ENCODE measurements at regions of chr16 and their contacts with region 1.

Region 1: DNA sequence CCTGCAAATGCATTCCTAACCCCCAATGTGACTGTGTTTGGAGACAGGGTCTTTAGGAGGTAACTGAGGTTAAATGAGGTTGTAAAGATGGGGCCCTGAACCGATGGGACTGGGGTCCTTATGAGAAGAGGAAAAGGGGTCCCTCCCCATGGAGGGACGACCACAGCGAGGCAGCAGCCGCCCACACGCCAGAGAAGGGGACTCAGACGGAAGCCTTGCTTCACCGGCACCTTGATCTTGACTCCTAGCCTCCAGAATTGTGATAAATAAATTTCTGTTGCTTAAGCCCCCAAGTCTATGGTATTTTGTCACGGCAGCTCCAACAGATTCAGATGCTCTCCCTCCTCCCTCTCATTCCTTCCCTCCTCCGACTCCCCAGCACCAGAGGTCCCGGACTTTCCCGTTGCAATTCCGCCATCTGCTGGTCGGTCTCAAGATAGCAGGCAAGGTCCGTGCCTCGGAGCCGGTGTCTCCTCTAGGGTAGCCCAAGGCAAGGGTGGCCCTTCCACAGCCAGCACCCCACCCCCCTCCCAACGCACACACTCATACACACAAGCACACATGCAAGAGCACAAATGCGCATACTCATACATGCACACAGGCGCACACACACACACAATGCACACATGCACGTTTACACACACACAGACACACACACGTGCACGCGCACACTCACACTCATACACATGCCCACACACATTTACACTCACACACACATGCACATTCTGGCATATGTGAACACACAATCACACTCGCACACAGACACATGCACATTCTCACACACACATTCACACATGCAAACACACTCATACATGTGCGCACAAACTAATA is 23.1 kb upstream of the C16orf78 start:
- DNase-seq: peak; percentile 39
- H3K4me3 ChIP-seq: no peak overlapping the region
- H3K27ac ChIP-seq: no peak overlapping the region
- H3K4me1 ChIP-seq: no peaks in the 10 kb centered on the region
- H3K27me3 ChIP-seq: no peaks in the 10 kb centered on the region
- CTCF ChIP-seq: peak; percentile 69 to 83

Region 2: GRCh38 chr16:48632137-48632774 is 718.2 kb before region 1 on chr16:
- CTCF ChIA-PET with region 1: no interaction called
- dilution Hi-C with region 1: no loop called
- in situ Hi-C with region 1: no loop called
- intact Hi-C with region 1: loop called (anchors 2 kb)
- DNase-seq: no peak
- H3K4me3 ChIP-seq: no peak overlapping the region
- H3K27ac ChIP-seq: no peak overlapping the region
- H3K4me1 ChIP-seq: no peaks in the 10 kb centered on the region
- H3K27me3 ChIP-seq: no peaks in the 10 kb centered on the region
- CTCF ChIP-seq: no peak

Region 3: GRCh38 chr16:48790151-48790550 is 560.3 kb before region 1 on chr16:
- CTCF ChIA-PET with region 1: no interaction called
- dilution Hi-C with region 1: no loop called
- in situ Hi-C with region 1: no loop called
- intact Hi-C with region 1: no loop called
- DNase-seq: no peak
- H3K4me3 ChIP-seq: no peak overlapping the region
- H3K27ac ChIP-seq: no peak overlapping the region
- H3K4me1 ChIP-seq: no peaks in the 10 kb centered on the region
- H3K27me3 ChIP-seq: no peaks in the 10 kb centered on the region
- CTCF ChIP-seq: no peak

Region 4: DNA sequence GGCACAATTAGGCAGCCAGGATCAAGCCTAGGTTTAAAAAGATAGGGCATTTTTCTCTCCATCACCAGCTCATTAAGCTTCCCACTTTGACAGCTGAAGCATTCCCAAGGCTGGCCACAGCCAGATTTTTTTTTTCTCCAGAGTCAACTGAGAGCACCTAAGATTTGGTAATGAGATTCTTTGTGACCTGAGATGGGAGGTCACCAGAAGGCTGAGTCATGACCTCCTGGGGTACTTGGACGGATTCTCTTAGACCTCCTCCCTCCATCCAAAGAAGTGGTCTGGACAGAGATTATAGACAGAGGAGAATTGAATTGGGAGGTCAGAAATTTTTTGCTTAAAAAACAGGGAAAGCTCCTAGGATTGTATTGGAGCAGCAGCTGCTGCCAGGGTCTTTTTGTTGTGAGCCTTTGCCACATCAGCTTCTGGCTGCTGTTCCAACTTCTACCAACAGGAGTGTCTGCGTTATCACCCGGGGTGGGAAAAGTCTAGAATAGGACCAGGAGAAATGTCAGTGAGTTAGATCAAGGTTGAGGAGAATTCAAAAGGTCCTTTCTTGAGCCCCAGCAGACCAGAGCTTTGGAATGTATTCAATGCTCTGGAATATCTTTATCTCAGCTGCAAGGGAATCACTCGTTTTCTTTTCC is 519.3 kb before region 1 on chr16:
- CTCF ChIA-PET with region 1: no interaction called
- dilution Hi-C with region 1: no loop called
- in situ Hi-C with region 1: no loop called
- intact Hi-C with region 1: loop called (anchors 10 kb)
- DNase-seq: no peak
- H3K4me3 ChIP-seq: no peak overlapping the region
- H3K27ac ChIP-seq: no peak overlapping the region
- H3K4me1 ChIP-seq: no peaks in the 10 kb centered on the region
- H3K27me3 ChIP-seq: no peaks in the 10 kb centered on the region
- CTCF ChIP-seq: peak; percentile 28 to 40

Region 5: GRCh38 chr16:49055824-49056545 is 294.5 kb before region 1 on chr16:
- CTCF ChIA-PET with region 1: no interaction called
- dilution Hi-C with region 1: no loop called
- in situ Hi-C with region 1: no loop called
- intact Hi-C with region 1: loop called (anchors 1 kb)
- DNase-seq: no peak
- H3K4me3 ChIP-seq: no peak overlapping the region
- H3K27ac ChIP-seq: no peak overlapping the region
- H3K4me1 ChIP-seq: no peaks in the 10 kb centered on the region
- H3K27me3 ChIP-seq: peaks cover 2% of the 10 kb centered on the region
- CTCF ChIP-seq: no peak

Region 6: DNA sequence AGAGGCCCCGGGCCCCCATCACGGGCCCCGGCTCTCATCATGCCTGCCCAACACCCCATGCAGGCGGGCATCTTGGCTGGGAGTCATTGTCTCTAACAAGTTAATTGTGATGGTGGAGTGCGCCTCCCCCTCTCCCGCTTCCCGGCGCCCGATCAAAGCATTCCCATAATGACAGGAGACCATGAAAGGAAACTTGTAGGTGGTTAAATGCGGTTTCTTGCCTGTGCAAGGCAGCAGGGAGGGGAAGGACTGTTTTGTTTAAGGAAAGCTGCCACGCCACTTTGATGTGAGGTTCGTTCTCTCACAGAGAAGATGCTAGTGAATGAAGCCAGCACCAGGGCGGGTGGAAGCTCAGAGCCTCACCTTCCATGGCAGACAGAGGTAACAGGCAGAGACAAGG is 68.5 kb after region 1 on chr16:
- CTCF ChIA-PET with region 1: no interaction called
- dilution Hi-C with region 1: no loop called
- in situ Hi-C with region 1: loop called in 1 of 2 experiments (anchors 10 kb)
- intact Hi-C with region 1: no loop called
- DNase-seq: no peak
- H3K4me3 ChIP-seq: no peak overlapping the region
- H3K27ac ChIP-seq: no peak overlapping the region
- H3K4me1 ChIP-seq: no peaks in the 10 kb centered on the region
- H3K27me3 ChIP-seq: no peaks in the 10 kb centered on the region
- CTCF ChIP-seq: no peak

Region 7: GRCh38 chr16:49452578-49452977 is 102.1 kb after region 1 on chr16:
- CTCF ChIA-PET with region 1: no interaction called
- dilution Hi-C with region 1: no loop called
- in situ Hi-C with region 1: no loop called
- intact Hi-C with region 1: no loop called
- DNase-seq: no peak
- H3K4me3 ChIP-seq: no peak overlapping the region
- H3K27ac ChIP-seq: no peak overlapping the region
- H3K4me1 ChIP-seq: no peaks in the 10 kb centered on the region
- H3K27me3 ChIP-seq: no peaks in the 10 kb centered on the region
- CTCF ChIP-seq: no peak

Measured in mammary epithelial cell (primary cell).